HEK293 (cell line): ENCODE measurements at regions of chr5 and their contacts with region 1.

Region 1: DNA sequence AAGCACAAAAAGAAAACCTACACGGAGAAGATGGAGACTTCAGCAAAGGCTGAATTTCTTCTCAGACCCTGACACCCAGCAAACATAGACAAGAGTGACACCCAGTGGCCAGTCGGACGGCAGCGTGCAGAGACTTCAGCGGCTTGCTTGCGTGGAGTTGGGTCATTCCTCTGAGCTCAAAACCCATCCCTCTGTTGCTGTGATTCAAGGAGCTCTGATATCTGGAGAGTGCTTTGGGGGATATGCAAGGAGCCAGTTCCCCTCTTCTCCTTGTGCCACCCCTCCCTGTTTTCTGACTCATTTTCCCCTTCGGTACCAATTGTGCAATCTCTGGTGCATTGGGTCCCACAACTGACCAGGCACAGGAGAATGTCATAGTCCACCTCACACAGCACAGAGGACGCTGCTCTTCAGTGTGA is 27.5 kb downstream of the SH3TC2 start:
- H3K4me3 ChIP-seq: no peak overlapping the region
- H3K27ac ChIP-seq: no peak overlapping the region
- H3K4me1 ChIP-seq: no peaks in the 10 kb centered on the region
- CTCF ChIP-seq: peak; percentile 53; the same call in 1 of the 2 replicates

Region 2: DNA sequence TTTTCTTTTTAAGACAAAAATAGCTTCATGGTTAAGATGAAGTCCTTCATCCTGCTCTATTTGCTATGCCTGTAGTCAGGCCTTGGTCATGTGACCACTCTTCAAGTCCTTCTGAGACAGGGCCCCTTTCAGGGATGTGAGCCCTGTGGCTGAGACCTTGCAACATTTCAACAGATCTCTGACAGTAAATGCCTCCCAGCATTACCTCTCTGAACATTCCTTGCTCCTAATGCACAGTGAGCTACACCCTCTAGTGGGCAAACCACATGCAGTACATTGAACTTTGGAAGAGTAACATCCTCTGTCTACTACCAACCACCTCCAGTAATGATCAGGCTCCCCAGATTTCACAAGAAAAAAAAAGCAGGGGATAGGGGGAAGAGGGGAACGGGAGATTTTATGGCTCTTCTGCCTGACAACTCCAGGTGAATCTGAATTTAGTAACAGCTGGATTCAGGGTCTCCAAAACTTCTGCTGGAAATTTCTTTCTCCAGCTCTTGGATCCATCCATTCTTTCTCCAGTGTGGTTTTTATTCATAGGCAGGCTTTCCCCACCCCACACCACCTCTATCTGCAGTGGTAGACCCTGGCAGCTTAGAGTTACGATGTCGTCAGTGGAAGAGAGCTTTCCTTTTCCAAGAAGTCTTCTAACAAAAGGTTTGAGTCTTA is 660.6 kb before region 1 on chr5:
- CTCF ChIA-PET with region 1: no interaction called
- POLR2A ChIA-PET with region 1: no interaction called
- H3K4me3 ChIP-seq: no peak overlapping the region
- H3K27ac ChIP-seq: no peak overlapping the region
- H3K4me1 ChIP-seq: no peaks in the 10 kb centered on the region
- CTCF ChIP-seq: peak; percentile 47; the same call in 1 of the 2 replicates

Region 3: GRCh38 chr5:148443998-148444397 is 591.4 kb before region 1 on chr5:
- CTCF ChIA-PET with region 1: interaction called, 13 read pairs
- POLR2A ChIA-PET with region 1: no interaction called
- H3K4me3 ChIP-seq: no peak overlapping the region
- H3K27ac ChIP-seq: no peak overlapping the region
- H3K4me1 ChIP-seq: no peaks in the 10 kb centered on the region
- CTCF ChIP-seq: 0 out of 2 replicates have a peak, but pooled peaks have one; percentile 9

Region 4: GRCh38 chr5:148687427-148687826 is 348.0 kb before region 1 on chr5:
- CTCF ChIA-PET with region 1: no interaction called
- POLR2A ChIA-PET with region 1: no interaction called
- H3K4me3 ChIP-seq: no peak overlapping the region
- H3K27ac ChIP-seq: no peak overlapping the region
- H3K4me1 ChIP-seq: no peaks in the 10 kb centered on the region
- CTCF ChIP-seq: no peak

Region 5: GRCh38 chr5:148912714-148913398 is 122.5 kb before region 1 on chr5:
- CTCF ChIA-PET with region 1: interaction called, 32 read pairs
- POLR2A ChIA-PET with region 1: no interaction called
- H3K4me3 ChIP-seq: no peak overlapping the region
- H3K27ac ChIP-seq: no peak overlapping the region
- H3K4me1 ChIP-seq: no peaks in the 10 kb centered on the region
- CTCF ChIP-seq: peak; percentile 22; the same call in 1 of the 2 replicates

Region 6: DNA sequence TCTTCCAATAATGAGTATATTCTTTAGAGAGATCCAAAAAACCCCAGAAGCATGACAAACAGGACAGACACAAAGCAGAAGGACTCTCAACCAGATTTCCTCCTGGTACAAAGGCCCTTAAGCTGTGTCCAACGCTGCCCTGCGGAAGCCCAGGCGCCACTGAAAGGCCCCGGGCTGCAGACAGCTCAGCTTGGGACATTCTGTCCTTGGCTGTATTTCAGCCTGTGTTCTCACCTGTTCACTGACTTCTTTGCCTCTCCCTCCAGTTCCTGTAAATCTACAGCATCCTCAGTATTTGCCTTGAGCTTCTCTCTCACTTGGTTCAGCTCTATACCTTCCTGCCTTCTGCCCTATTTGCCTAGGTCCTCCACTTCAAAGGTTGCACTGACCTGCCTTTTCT is 69.0 kb before region 1 on chr5:
- CTCF ChIA-PET with region 1: interaction called, 11 read pairs
- POLR2A ChIA-PET with region 1: no interaction called
- H3K4me3 ChIP-seq: no peak overlapping the region
- H3K27ac ChIP-seq: no peak overlapping the region
- H3K4me1 ChIP-seq: no peaks in the 10 kb centered on the region
- CTCF ChIP-seq: no peak

Region 7: DNA sequence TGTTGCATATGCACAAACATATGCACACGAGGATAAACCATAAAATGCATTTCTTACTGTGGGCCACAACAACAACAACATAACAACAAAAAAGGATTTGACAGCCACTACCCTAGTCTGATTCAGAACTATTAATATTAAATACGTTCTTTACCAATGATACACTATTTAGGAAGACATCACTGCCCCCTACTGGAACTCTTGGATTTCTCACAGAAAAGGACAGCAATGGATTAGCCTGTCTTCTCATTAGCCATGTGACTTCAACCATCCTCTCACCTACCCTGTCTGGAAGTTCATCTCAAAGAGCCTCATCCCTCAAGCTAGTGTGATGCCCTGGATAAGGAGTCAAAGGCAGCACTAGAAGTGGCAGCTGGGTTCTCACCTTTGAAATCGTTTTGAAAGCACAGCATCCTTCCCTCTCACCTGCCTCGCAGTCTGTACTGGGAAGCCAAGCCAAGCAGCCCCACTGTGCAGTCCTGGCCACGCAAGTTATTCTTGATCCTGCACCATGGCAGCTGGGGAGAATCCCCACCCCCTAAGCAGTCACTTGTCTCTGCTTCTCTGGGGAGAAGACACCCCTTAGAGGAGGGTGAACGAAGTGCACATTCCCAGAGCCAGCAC is 37.1 kb before region 1 on chr5:
- CTCF ChIA-PET with region 1: interaction called, 44 read pairs
- POLR2A ChIA-PET with region 1: no interaction called
- H3K4me3 ChIP-seq: no peak overlapping the region
- H3K27ac ChIP-seq: no peak overlapping the region
- H3K4me1 ChIP-seq: no peaks in the 10 kb centered on the region
- CTCF ChIP-seq: peak; percentile 28; the same call in 1 of the 2 replicates

Region 8: GRCh38 chr5:149114403-149115312 is 79.3 kb after region 1 on chr5:
- CTCF ChIA-PET with region 1: interaction called, 65 read pairs
- POLR2A ChIA-PET with region 1: no interaction called
- H3K4me3 ChIP-seq: no peak overlapping the region
- H3K27ac ChIP-seq: no peak overlapping the region
- H3K4me1 ChIP-seq: peaks cover 5% of the 10 kb centered on the region
- CTCF ChIP-seq: peak; percentile 74; the same call in 1 of the 2 replicates